ENCODE measurements at regions of chr10 and their contacts with region 1.

Region 1: GRCh38 chr10:103192451-103193106 is 493 bp downstream of the NT5C2 start:
- DNase-seq: peak; percentile 83 to 90 (median 88)
- ATAC-seq: peak; percentile 60 to 77 (median 76)
- H3K4me3 ChIP-seq: peak overlapping the region; percentile 65 to 94 (median 86)
- H3K27ac ChIP-seq: peak overlapping the region; percentile 92 to 100 (median 98)
- H3K4me1 ChIP-seq: peaks cover 4 to 71% (median 53%) of the 10 kb centered on the region in 12 donors
- H3K27me3 ChIP-seq: no peaks in the 10 kb centered on the region
- CTCF ChIP-seq: no peak
- POLR2A ChIP-seq: no peak

Region 2: DNA sequence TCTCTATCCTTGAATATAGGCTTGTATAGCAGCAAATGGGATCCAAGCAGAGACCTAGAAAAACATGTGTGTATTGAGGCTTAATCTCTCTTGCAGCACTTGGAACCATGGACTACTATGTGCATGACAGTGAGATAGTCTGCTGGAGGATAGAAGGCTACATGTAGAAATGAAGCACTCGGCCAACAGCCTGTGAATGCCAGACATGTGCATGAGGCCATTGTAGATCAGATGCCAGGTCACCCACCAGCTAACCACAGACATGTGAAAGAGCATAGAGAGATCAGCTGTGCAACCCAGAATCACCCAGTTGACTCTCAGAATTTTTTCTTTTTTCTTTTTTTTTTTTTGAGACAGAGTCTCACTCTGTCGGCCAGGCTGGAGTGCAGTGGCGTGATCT is 90.4 kb before region 1 on chr10:
- intact Hi-C with region 1: loop called in 1 of 10 experiments (anchors 5 kb)
- DNase-seq: no peak
- ATAC-seq: peak; percentile 16 to 65 (median 51)
- H3K4me3 ChIP-seq: no peak overlapping the region
- H3K27ac ChIP-seq: peak overlapping the region in 1 of 12 donors; percentile 5
- H3K4me1 ChIP-seq: peaks cover 0 to 22% (median 3%) of the 10 kb centered on the region in 12 donors
- H3K27me3 ChIP-seq: no peaks in the 10 kb centered on the region
- CTCF ChIP-seq: no peak
- POLR2A ChIP-seq: no peak

Region 3: GRCh38 chr10:103145860-103146466 is 46.6 kb before region 1 on chr10:
- intact Hi-C with region 1: loop called in 7 of 10 experiments (anchors 2 to 10 kb)
- DNase-seq: peak in 4 of 5 donors; percentile 83 to 90 (median 88)
- ATAC-seq: peak; percentile 76 to 88 (median 82)
- H3K4me3 ChIP-seq: peak overlapping the region in 8 of 12 donors; percentile 26 to 48 (median 35)
- H3K27ac ChIP-seq: peak overlapping the region; percentile 31 to 77 (median 57)
- H3K4me1 ChIP-seq: peaks cover 0 to 56% (median 28%) of the 10 kb centered on the region in 12 donors
- H3K27me3 ChIP-seq: no peaks in the 10 kb centered on the region
- CTCF ChIP-seq: no peak
- POLR2A ChIP-seq: no peak

Region 4: GRCh38 chr10:103225939-103226338 is 33.4 kb after region 1 on chr10:
- intact Hi-C with region 1: loop called in 5 of 10 experiments (anchors 2 to 10 kb)
- DNase-seq: no peak
- ATAC-seq: no peak
- H3K4me3 ChIP-seq: no peak overlapping the region
- H3K27ac ChIP-seq: peak overlapping the region in 1 of 12 donors; percentile 12
- H3K4me1 ChIP-seq: peaks cover 0 to 29% (median 11%) of the 10 kb centered on the region in 12 donors
- H3K27me3 ChIP-seq: no peaks in the 10 kb centered on the region
- CTCF ChIP-seq: no peak
- POLR2A ChIP-seq: no peak

Region 5: GRCh38 chr10:103238506-103239252 is 46.1 kb after region 1 on chr10:
- intact Hi-C with region 1: loop called in 8 of 10 experiments (anchors 5 to 10 kb)
- DNase-seq: peak in 3 of 5 donors; percentile 35
- ATAC-seq: peak; percentile 55 to 90 (median 80)
- H3K4me3 ChIP-seq: no peak overlapping the region
- H3K27ac ChIP-seq: no peak overlapping the region
- H3K4me1 ChIP-seq: peaks cover 0 to 31% (median 7%) of the 10 kb centered on the region in 12 donors
- H3K27me3 ChIP-seq: no peaks in the 10 kb centered on the region
- CTCF ChIP-seq: peak in 10 of 12 donors; percentile 9 to 60 (median 34)
- POLR2A ChIP-seq: no peak

Region 6: DNA sequence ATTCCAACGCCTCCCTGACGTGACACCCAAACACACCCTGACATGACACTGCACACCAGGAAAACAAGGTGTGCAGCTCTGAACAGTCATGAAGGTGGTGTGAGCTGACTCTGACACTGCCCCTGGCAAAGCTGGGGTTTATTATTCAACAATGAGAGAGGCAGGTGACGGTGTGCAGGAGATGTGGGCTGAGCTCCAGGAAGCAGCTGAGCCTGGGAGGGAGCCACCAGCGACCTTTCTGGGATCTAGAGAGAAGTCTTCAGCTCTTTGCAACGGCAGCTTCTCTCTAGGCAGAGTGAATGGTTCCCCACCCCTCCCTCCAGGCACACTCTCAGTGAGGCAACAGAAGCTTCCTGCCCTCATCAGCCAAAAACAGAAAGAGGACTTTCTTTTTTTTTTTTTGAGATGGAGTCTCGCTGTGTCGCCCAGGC is 597.2 kb after region 1 on chr10:
- intact Hi-C with region 1: no loop called
- DNase-seq: peak in 1 of 5 donors; percentile 33
- ATAC-seq: no peak
- H3K4me3 ChIP-seq: no peak overlapping the region
- H3K27ac ChIP-seq: no peak overlapping the region
- H3K4me1 ChIP-seq: peaks cover 0 to 62% (median 17%) of the 10 kb centered on the region in 12 donors
- H3K27me3 ChIP-seq: no peaks in the 10 kb centered on the region
- CTCF ChIP-seq: no peak
- POLR2A ChIP-seq: no peak